HepG2 (cell line): ENCODE measurements at regions of chr14 and their contacts with region 1.

Region 1: GRCh38 chr14:104768437-104769323 is 15.7 kb downstream of the SIVA1 start:
- DNase-seq: peak; percentile 86
- ATAC-seq: peak; percentile 79
- H3K4me3 ChIP-seq: peak overlapping the region; percentile 65 to 78 (median 67)
- H3K27ac ChIP-seq: peak overlapping the region; percentile 97
- H3K4me1 ChIP-seq: peaks cover 29% of the 10 kb centered on the region
- H3K27me3 ChIP-seq: no peaks in the 10 kb centered on the region; a peak in 1 of 5 replicates
- CTCF ChIP-seq: peak; percentile 95
- EP300 ChIP-seq: peak in 1 of 2 experiments; percentile 32; a peak in 2 of 4 replicates
- POLR2A ChIP-seq: peak; percentile 26 to 62; a peak in 2 of 4 replicates
- RAD21 ChIP-seq: peak; percentile 86

Region 2: GRCh38 chr14:104424406-104425072 is 344.1 kb before region 1 on chr14:
- CTCF ChIA-PET with region 1: no interaction called
- POLR2A ChIA-PET with region 1: no interaction called
- in situ Hi-C with region 1: no loop called
- intact Hi-C with region 1: no loop called
- DNase-seq: no peak
- ATAC-seq: no peak
- H3K4me3 ChIP-seq: no peak overlapping the region
- H3K27ac ChIP-seq: no peak overlapping the region
- H3K4me1 ChIP-seq: no peaks in the 10 kb centered on the region
- H3K27me3 ChIP-seq: peaks cover 19 to 47% of the 10 kb centered on the region in 2 experiments; a peak in 4 of 5 replicates
- CTCF ChIP-seq: no peak
- EP300 ChIP-seq: no peak
- POLR2A ChIP-seq: no peak
- RAD21 ChIP-seq: no peak

Region 3: GRCh38 chr14:104715871-104716270 is 52.8 kb before region 1 on chr14:
- CTCF ChIA-PET with region 1: no interaction called
- POLR2A ChIA-PET with region 1: no interaction called
- in situ Hi-C with region 1: no loop called
- intact Hi-C with region 1: no loop called
- DNase-seq: no peak
- ATAC-seq: no peak
- H3K4me3 ChIP-seq: no peak overlapping the region
- H3K27ac ChIP-seq: no peak overlapping the region
- H3K4me1 ChIP-seq: no peaks in the 10 kb centered on the region
- H3K27me3 ChIP-seq: no peaks in the 10 kb centered on the region
- CTCF ChIP-seq: no peak
- EP300 ChIP-seq: no peak
- POLR2A ChIP-seq: no peak
- RAD21 ChIP-seq: no peak

Region 4: DNA sequence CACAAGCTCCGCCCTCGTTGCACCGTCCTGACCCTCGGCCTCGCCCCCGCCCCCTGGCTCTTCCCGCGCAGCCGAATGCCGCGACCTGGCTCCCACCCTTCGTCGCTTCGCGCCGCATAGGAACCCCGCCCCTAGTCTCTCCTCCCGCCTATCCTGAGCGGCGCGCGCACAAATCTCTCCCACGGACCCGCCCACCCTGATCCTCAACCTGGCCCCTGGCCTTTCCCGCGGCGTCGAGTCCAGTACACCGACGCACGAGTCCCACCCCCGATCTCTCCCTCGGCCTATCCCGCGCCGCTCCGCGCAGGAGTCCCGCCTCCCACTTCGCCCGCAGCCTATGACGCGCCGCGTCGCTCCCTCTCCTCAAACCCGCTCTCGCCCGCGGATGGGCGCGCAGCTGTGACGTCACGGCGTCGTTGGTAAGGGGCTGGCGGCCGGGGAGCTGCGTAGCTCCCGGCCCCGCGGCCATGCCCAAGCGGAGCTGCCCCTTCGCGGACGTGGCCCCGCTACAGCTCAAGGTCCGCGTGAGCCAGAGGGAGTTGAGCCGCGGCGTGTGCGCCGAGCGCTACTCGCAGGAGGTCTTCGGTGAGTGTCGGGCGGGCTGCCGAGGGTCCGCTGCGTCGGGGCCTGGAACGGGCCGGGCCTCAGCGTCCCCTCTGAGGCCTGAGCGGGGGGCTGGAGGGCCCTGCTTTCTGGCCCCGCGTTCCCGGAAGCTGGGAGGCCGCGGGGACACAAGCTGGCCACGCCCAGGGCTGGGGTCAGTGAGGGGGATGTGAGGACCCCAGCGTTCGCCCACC is 15.7 kb before region 1 on chr14 and contains the start of gene SIVA1:
- CTCF ChIA-PET with region 1: no interaction called
- POLR2A ChIA-PET with region 1: interaction called, 72 read pairs
- in situ Hi-C with region 1: no loop called
- intact Hi-C with region 1: loop called (anchors 2 kb)
- DNase-seq: peak; percentile 97
- ATAC-seq: peak; percentile 81
- H3K4me3 ChIP-seq: peak within 1 kb of the TSS; percentile 78 to 94 (median 80)
- H3K27ac ChIP-seq: peak within 1 kb of the TSS; percentile 88
- H3K4me1 ChIP-seq: peaks cover 69% of the 10 kb centered on the region
- H3K27me3 ChIP-seq: no peaks in the 10 kb centered on the region
- CTCF ChIP-seq: no peak; the same call in 1 of the 2 replicates
- EP300 ChIP-seq: no peak; a peak in 1 of 4 replicates
- POLR2A ChIP-seq: peak; percentile 83 to 86
- RAD21 ChIP-seq: peak; percentile 58
- total RNA-seq, gene SIVA1: 153 and 186 TPM in 2 replicates

Region 5: GRCh38 chr14:104800015-104800770 is 31.5 kb after region 1 on chr14:
- CTCF ChIA-PET with region 1: interaction called, 3 read pairs
- POLR2A ChIA-PET with region 1: interaction called, 23 read pairs
- in situ Hi-C with region 1: no loop called
- intact Hi-C with region 1: no loop called
- DNase-seq: peak; percentile 76
- ATAC-seq: peak; percentile 25
- H3K4me3 ChIP-seq: peak overlapping the region; percentile 82 to 92 (median 90)
- H3K27ac ChIP-seq: peak overlapping the region; percentile 74
- H3K4me1 ChIP-seq: peaks cover 67% of the 10 kb centered on the region
- H3K27me3 ChIP-seq: no peaks in the 10 kb centered on the region
- CTCF ChIP-seq: peak; percentile 64
- EP300 ChIP-seq: 0 out of 4 replicates have a peak, but pooled peaks of 1 of the 2 experiments have one; percentile 34
- POLR2A ChIP-seq: no peak
- RAD21 ChIP-seq: no peak

Region 6: DNA sequence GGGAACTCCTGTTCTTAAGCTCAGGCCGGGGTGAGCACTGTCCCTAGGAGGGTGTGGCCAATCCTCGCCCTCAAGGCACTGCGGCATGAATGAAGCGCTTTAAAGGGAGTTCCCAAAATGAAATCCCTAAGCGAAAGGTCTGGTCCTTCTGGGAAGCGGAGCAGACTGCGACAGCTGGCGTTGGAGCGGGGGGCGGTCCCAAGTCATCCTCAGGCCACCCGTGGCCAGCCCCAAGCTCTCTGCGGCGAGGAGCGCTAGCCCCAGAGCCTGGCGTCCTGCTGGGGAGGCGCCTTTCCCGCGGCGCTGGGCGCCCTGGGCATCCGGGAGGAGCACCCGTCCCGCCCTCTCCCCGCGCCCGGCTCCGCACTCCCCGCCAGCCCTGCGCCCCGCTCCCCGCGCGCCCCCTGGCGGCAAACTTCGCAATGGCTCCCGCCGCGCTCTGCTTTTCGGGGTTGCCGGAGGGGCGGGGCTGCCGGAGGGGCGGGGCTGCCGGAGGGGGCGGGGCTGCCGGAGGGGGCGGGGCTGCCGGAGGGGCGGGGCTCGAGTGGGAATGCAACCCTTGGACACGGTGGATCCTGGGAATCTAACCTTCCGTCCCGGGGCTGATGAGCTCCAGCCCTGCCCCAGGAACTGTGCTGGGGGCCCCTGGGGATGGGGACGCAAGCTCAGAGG is 57.6 kb after region 1 on chr14:
- CTCF ChIA-PET with region 1: interaction called, 10 read pairs
- POLR2A ChIA-PET with region 1: interaction called, 59 read pairs
- in situ Hi-C with region 1: loop called (anchors 5 kb)
- intact Hi-C with region 1: no loop called
- DNase-seq: peak; percentile 65
- ATAC-seq: peak; percentile 75
- H3K4me3 ChIP-seq: peak overlapping the region; percentile 66 to 82 (median 77)
- H3K27ac ChIP-seq: peak overlapping the region; percentile 56
- H3K4me1 ChIP-seq: peaks cover 29% of the 10 kb centered on the region
- H3K27me3 ChIP-seq: no peaks in the 10 kb centered on the region; a peak in 1 of 5 replicates
- CTCF ChIP-seq: peak; percentile 83
- EP300 ChIP-seq: no peak
- POLR2A ChIP-seq: peak in 1 of 2 experiments; percentile 72; a peak in 2 of 4 replicates
- RAD21 ChIP-seq: peak; percentile 40; the same call in 1 of the 2 replicates

Region 7: GRCh38 chr14:104872469-104873341 is 104.0 kb after region 1 on chr14:
- CTCF ChIA-PET with region 1: interaction called, 11 read pairs
- POLR2A ChIA-PET with region 1: interaction called, 7 read pairs
- in situ Hi-C with region 1: loop called (anchors 5 kb)
- intact Hi-C with region 1: loop called (anchors 1 kb)
- DNase-seq: no peak
- ATAC-seq: no peak
- H3K4me3 ChIP-seq: no peak overlapping the region
- H3K27ac ChIP-seq: no peak overlapping the region
- H3K4me1 ChIP-seq: peaks cover 2% of the 10 kb centered on the region; the same call in 1 of the 2 replicates
- H3K27me3 ChIP-seq: no peaks in the 10 kb centered on the region
- CTCF ChIP-seq: no peak
- EP300 ChIP-seq: no peak
- POLR2A ChIP-seq: no peak
- RAD21 ChIP-seq: no peak